Activated naive CD4-positive, alpha-beta T cell treated with anti-CD3 and anti-CD28 coated beads for 36 hours (primary cell): ENCODE measurements at regions of chr1 and their contacts with region 1.

Region 1: DNA sequence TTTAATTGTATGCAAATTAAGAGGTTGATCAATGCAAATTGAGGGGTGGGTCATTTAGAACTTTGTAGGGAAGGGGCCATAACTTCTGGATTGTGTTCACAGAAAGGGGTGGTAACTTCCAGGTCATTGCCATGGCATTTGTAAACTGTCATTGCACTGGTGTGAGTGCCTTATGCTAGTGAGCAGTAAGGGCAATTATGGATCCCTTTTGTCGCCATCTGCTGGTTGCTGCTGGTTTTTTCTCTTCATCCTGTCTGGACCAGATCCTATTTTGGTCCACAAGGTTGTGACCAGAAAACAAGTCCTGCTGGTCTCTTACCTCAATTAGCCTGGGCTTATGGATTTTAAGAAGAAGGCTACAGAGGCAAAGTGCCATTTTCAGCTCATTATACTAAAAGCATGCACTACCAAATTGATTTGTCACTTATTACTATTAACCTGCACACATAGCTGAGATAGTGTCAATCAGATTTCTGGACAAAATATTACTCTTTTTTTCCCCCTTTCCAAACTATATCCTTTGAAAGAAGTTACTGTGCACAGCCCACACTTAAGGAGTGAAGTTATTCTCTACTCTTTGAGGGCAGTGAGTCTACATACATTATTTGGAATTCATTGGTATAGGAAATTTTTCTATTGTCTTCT is 196.2 kb downstream of the ZC3H11B start:
- DNase-seq: peak; percentile 78
- H3K4me3 Mint-ChIP-seq: no peak overlapping the region
- H3K27ac Mint-ChIP-seq: no peak overlapping the region
- H3K4me1 Mint-ChIP-seq: no peaks in the 10 kb centered on the region
- H3K27me3 Mint-ChIP-seq: no peaks in the 10 kb centered on the region

Region 2: GRCh38 chr1:218259800-218260199 is 1156.9 kb before region 1 on chr1:
- CTCF ChIA-PET with region 1: no interaction called
- intact Hi-C with region 1: loop called (anchors 2 kb)
- DNase-seq: peak; percentile 5
- H3K4me3 Mint-ChIP-seq: no peak overlapping the region
- H3K27ac Mint-ChIP-seq: no peak overlapping the region
- H3K4me1 Mint-ChIP-seq: no peaks in the 10 kb centered on the region
- H3K27me3 Mint-ChIP-seq: peaks cover 23% of the 10 kb centered on the region

Region 3: DNA sequence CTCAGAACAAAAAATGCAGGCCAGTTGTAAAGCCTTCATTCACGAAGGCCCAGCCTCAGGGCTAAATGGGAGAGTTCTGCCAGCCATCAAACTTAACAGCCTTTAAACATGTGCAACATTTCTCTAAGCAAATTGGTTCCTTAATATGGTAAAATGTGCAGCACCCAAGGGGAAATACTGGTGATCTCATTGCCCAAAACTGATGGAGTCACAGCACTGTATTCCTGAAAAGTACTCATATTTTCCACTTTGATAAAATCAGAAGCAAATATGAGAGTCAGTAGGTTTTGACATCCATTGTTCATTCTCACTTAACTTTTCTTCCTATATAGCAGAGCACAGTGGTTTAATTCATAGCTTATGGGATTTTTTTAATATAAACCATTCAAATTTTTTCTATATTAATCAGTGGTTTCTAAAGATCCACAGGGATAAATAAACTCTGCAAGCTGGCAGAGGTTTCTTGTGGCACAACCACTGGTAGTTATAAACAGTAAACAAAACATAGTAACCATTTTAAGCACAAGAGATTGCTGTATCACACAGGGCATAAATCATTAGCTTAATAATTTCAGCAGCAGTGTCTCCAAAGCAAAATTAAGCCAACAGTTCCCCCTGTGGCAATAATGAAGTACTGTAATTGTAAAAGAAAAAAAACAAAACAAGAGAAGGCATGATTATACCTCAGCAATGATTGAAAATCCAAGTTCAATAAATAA is 349.9 kb before region 1 on chr1:
- CTCF ChIA-PET with region 1: no interaction called
- intact Hi-C with region 1: loop called (anchors 5 kb)
- DNase-seq: no peak
- H3K4me3 Mint-ChIP-seq: no peak overlapping the region
- H3K27ac Mint-ChIP-seq: no peak overlapping the region
- H3K4me1 Mint-ChIP-seq: peaks cover 7% of the 10 kb centered on the region
- H3K27me3 Mint-ChIP-seq: peaks cover 5% of the 10 kb centered on the region